ENCODE measurements at regions of chr5 and their contacts with region 1.

Region 1: DNA sequence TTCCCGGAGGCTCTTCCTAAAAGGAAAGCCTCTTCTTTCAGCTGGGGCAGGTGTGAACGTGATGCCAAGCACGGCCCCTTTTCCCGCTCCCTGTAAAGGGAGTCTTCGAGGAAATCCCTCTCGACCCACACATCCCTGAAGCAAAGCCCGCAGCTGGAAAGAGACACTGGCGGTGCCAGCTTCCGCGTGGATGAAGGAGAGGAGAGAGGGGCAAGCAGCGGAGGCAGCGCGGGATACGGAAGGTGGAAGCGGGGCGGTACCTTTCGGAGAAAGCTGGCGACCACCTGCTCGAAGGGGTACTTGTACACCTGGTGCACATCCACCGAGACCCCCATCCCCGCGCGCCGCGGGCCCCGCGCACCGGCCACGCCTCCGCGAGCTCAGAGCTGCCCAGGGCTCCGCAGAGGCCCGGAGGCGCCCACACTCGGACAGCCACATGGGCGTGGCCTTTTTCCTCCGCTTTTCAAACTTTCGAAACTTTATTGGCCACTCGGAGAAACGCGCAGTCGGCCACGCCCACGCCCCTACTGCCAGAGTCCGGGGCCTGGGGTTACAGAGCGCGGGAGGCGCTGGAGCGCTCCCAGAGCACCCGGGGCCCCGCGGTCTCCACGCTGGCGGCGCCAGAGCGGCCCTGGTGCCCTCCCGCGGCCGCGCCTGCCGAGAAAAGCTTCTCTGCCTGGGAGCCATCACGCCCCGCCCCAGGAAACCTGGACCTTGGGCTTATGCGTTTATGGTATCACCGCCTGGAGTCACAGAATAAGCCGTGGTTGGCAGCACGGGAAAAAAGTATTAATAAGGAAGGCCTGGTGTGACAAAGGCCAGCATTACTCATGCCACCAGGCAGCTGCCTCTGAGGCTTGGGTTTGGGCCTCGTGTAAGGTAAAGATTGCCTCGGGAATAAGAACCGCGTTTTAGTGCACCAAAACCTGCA is at the start of gene PRELID2:
- DNase-seq: peak; percentile 61
- ATAC-seq: peak; percentile 93
- H3K4me3 ChIP-seq: peak within 1 kb of the TSS; percentile 68 to 96
- H3K27ac ChIP-seq: peak within 1 kb of the TSS; percentile 89
- H3K4me1 ChIP-seq: peaks cover 21% of the 10 kb centered on the region
- H3K27me3 ChIP-seq: no peaks in the 10 kb centered on the region
- CTCF ChIP-seq: peak; percentile 20; the same call in 1 of the 2 replicates
- total RNA-seq, gene PRELID2: 15.4 TPM

Region 2: DNA sequence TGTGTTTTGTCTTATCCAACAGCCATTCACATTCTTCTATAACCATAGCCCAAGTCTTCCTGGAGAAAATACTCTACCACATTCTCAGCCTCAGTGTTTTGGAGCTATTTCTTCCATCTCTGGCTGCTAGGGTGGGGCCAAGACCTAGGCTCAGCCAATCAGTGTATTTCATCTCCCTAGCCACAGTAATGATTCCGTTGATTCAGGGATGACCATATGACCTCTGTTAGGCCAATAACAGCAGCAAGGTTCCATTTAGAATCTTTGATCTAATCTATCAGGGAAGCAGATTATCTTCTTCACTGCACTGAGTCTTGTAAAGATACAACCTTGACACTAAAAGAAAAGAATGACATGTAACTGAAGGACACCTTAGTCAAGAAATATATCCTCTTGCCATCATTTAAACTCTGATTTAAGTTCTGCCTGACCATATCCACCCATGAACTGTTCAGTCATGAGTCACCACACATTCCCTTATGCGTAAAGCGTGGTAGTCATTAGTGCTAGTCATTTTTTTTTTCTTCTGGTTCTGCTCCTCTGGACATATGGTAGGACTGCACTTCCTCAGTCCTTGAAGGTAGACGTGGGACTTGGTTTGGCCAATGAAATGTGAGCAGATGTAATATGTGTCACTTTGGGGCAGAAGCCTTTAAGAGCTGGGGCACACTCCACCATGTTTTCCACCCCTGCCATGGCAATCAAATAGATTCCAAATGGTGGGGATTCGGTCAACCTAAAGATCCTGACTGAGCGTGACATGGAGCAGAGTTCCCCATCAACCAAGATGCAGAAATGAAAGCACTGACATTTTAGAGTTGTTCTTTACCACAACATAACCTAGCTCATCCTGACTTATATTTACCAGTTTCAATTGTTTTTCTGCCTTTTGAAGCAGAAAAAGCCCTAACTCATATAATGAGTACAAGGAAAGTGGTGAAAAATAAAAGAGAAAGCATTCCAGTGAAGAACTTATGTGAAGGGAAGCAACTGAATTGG is 12.6 kb after region 1 on chr5:
- CTCF ChIA-PET with region 1: interaction called, 13 read pairs
- POLR2A ChIA-PET with region 1: interaction called, 6 read pairs
- in situ Hi-C with region 1: no loop called
- intact Hi-C with region 1: no loop called
- DNase-seq: no peak
- ATAC-seq: peak; percentile 56; the same call in 1 of the 2 replicates
- H3K4me3 ChIP-seq: no peak overlapping the region
- H3K27ac ChIP-seq: no peak overlapping the region
- H3K4me1 ChIP-seq: peaks cover 4% of the 10 kb centered on the region; the same call in 1 of the 2 replicates
- H3K27me3 ChIP-seq: no peaks in the 10 kb centered on the region
- CTCF ChIP-seq: no peak

Region 3: GRCh38 chr5:145936401-145937131 is 101.4 kb after region 1 on chr5 and contains the start of gene SH3RF2:
- CTCF ChIA-PET with region 1: no interaction called
- POLR2A ChIA-PET with region 1: no interaction called
- in situ Hi-C with region 1: no loop called
- intact Hi-C with region 1: loop called (anchors 5 kb)
- DNase-seq: no peak
- ATAC-seq: peak; percentile 85
- H3K4me3 ChIP-seq: peak within 1 kb of the TSS; percentile 46 to 76
- H3K27ac ChIP-seq: peak within 1 kb of the TSS; percentile 100
- H3K4me1 ChIP-seq: peaks cover 67% of the 10 kb centered on the region
- H3K27me3 ChIP-seq: no peaks in the 10 kb centered on the region
- CTCF ChIP-seq: no peak
- total RNA-seq, gene SH3RF2: 23.1 TPM

Region 4: DNA sequence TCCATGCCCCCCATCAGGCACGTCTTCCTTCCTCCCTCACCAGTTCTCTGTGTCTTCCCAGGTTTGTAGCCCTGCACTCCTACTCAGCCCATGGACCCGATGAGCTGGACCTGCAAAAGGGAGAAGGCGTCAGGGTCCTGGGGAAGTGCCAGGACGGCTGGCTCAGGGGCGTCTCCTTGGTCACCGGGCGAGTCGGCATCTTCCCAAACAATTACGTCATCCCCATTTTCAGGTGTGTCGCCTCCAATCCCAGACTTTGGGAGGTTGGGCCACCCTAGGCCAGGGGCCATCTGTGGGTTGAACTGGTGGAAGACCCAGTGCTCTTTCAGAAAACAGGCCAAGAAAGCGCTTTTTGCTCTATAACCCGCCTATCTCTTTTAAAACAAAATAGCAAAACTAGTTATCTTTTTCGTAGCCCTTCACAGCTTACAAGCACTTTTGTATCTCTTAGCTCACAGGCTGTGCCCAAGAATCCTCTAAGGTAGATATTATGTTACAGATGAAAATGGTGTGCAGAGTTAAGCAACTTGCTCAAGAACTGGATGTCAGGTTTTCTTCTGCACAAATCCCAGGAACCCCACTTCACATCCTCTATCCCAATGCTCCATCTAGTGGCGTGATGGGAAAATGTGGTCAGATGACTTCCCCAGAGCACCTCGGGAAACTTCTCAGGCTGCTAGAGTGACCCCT is 214.0 kb after region 1 on chr5:
- CTCF ChIA-PET with region 1: no interaction called
- POLR2A ChIA-PET with region 1: interaction called, 3 read pairs
- in situ Hi-C with region 1: no loop called
- intact Hi-C with region 1: loop called (anchors 5 kb)
- DNase-seq: peak; percentile 22
- ATAC-seq: peak; percentile 82
- H3K4me3 ChIP-seq: no peak overlapping the region
- H3K27ac ChIP-seq: no peak overlapping the region
- H3K4me1 ChIP-seq: no peaks in the 10 kb centered on the region
- H3K27me3 ChIP-seq: no peaks in the 10 kb centered on the region
- CTCF ChIP-seq: peak; percentile 81

Measured in Panc1 (cell line).